ENCODE measurements at regions of chr9 and their contacts with region 1.

Region 1: GRCh38 chr9:36470643-36471290 is 70.7 kb upstream of the RNF38 start:
- DNase-seq: peak; percentile 81
- CTCF ChIP-seq: no peak

Region 2: DNA sequence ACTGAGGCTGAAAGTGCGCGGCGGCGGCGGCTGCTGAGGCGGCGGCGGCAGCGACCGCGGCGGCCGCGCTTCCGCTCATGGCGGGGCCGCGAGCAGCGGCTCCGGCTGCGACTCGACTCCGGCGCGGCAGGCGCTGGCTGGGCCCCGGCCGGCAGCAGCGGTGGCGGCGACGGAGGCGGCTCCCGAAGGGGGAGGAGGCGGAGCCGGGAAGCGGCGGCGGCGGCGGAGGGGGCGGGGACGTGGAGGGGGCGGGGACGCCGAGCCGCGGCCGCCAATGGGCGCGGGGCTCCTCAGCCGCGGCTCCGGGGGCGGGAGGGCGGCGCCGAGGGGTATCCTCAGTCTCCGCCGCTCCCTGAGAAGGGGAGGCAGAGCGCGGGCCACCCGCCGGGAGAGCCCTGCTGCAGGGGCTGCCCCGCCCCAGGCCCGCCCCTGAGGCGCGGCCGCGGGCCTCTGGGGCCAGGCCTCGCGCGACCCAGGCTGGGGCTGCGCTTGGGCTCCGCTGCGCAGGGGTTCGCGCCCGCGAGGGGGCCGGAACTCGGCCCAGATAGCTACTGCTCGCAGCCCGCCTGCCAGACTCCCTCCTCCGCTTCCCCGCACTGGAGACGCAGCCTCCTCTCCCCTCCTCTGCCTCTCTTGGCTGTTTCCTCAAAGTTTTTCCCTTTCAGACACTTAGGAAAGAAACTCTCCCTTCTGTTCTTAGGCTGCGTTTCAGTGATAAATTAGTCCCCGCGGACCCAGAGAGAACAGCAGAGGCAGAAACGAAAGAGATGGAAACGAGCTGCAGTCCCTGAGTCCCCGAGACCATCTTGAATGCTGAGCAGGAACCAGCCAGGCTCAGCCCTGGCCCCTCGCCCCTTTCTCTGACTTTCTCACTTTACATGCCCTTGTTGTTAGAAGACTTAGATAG is 17.0 kb after region 1 on chr9:
- CTCF ChIA-PET with region 1: interaction called, 12 read pairs
- POLR2A ChIA-PET with region 1: interaction called, 6 read pairs
- DNase-seq: peak; percentile 95
- CTCF ChIP-seq: no peak

Measured in GM10248 (cell line).